ENCODE measurements at regions of chr2 and their contacts with region 1.

Region 1: DNA sequence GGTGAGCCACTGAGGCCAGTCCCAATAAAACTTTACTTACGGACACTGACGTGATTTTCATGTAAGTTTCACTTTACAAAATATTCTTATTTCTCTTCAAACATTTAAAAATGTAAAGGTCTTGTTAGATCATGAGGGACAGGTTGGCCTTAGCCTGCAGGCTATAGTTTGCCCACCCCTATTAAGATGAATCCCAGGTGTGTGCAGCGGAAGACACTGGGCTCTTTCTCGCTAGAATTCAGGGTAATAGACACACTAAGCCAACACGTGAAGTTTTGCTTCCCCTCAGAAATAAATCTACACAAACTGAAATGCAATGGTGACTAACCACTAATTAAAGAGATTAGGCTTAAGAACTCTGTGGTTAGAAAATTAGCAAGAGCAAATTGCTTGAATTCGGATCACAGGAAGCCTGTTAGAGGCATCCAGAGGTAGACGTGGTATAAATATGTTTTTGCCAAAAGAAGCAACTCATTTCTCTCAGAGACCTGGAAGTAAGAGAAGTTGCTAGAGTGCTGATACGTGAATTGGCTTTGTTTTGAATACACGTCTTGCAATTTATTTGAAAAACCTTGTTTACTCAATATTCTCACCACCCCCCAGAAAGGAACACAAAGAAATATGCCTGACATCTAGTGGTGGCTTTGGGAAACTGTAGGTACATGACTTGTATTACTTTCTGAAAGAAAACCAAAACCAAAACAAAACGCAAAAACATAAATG is 151.6 kb downstream of the DTNB start:
- DNase-seq: no peak
- ATAC-seq: peak; percentile 97
- H3K4me3 Mint-ChIP-seq: peak overlapping the region; percentile 7
- H3K27ac Mint-ChIP-seq: peak overlapping the region; percentile 38
- H3K4me1 Mint-ChIP-seq: peaks cover 23% of the 10 kb centered on the region
- H3K27me3 Mint-ChIP-seq: no peaks in the 10 kb centered on the region
- CTCF ChIP-seq: no peak

Region 2: GRCh38 chr2:25228848-25229278 is 293.0 kb before region 1 on chr2:
- CTCF ChIA-PET with region 1: no interaction called
- POLR2A ChIA-PET with region 1: no interaction called
- intact Hi-C with region 1: no loop called
- DNase-seq: no peak
- ATAC-seq: peak; percentile 59
- H3K4me3 Mint-ChIP-seq: no peak overlapping the region
- H3K27ac Mint-ChIP-seq: no peak overlapping the region
- H3K4me1 Mint-ChIP-seq: peaks cover 18% of the 10 kb centered on the region
- H3K27me3 Mint-ChIP-seq: no peaks in the 10 kb centered on the region
- CTCF ChIP-seq: no peak

Region 3: GRCh38 chr2:25252281-25253105 is 269.3 kb before region 1 on chr2:
- CTCF ChIA-PET with region 1: no interaction called
- POLR2A ChIA-PET with region 1: no interaction called
- intact Hi-C with region 1: loop called (anchors 5 kb)
- DNase-seq: peak; percentile 46
- ATAC-seq: peak; percentile 65
- H3K4me3 Mint-ChIP-seq: peak overlapping the region; percentile 78
- H3K27ac Mint-ChIP-seq: no peak overlapping the region
- H3K4me1 Mint-ChIP-seq: peaks cover 29% of the 10 kb centered on the region
- H3K27me3 Mint-ChIP-seq: no peaks in the 10 kb centered on the region
- CTCF ChIP-seq: no peak

Region 4: DNA sequence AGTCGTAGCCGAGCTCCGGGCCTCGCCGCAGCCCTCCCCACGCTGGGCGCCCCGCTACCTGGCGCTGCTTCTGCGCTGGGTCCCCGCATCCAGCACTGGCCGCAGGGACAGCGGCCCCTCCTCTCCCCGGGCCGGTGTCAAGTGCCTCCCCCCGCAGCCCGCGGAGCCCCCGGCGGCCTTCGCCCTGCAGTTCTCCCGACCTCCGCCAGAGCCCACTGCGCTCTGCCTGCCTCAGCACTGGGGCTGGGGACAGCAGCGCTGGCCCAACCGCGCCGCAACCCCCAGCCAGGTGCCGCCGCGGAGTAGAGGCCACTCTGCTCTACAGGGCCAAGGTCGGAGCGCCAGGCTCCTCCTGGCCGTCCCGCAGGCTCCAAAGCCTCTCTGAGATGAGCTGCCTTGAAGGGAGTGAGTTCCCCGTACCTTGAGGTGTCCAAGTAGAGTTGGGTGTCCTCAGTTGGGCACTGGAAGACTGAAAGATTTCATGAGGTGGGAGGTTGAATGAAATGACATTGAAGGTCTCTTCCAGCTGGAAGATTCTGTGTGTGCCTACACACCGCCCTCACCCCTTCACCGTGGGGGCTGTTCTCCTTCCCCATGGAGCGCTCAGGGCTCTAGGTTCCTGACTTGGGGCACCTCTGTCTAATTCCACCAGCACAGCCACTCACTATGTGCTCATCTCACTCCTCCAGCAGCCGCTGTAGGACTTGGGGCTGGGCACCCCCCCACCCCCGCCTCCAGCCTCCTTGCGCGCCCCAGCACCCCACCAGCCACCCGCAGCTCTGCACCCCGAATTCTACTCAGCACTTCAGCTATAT is 179.2 kb before region 1 on chr2:
- CTCF ChIA-PET with region 1: interaction called, 3 read pairs
- POLR2A ChIA-PET with region 1: no interaction called
- intact Hi-C with region 1: loop called (anchors 1 kb)
- DNase-seq: peak; percentile 82
- ATAC-seq: peak; percentile 92
- H3K4me3 Mint-ChIP-seq: peak overlapping the region; percentile 84
- H3K27ac Mint-ChIP-seq: peak overlapping the region; percentile 59
- H3K4me1 Mint-ChIP-seq: peaks cover 19% of the 10 kb centered on the region
- H3K27me3 Mint-ChIP-seq: peaks cover 1% of the 10 kb centered on the region
- CTCF ChIP-seq: peak; percentile 74

Region 5: GRCh38 chr2:25411281-25411680 is 110.5 kb before region 1 on chr2:
- CTCF ChIA-PET with region 1: no interaction called
- POLR2A ChIA-PET with region 1: interaction called, 4 read pairs
- intact Hi-C with region 1: loop called (anchors 1 kb)
- DNase-seq: no peak
- ATAC-seq: peak; percentile 50
- H3K4me3 Mint-ChIP-seq: peak overlapping the region; percentile 71
- H3K27ac Mint-ChIP-seq: peak overlapping the region; percentile 87
- H3K4me1 Mint-ChIP-seq: peaks cover 71% of the 10 kb centered on the region
- H3K27me3 Mint-ChIP-seq: no peaks in the 10 kb centered on the region
- CTCF ChIP-seq: no peak

Region 6: DNA sequence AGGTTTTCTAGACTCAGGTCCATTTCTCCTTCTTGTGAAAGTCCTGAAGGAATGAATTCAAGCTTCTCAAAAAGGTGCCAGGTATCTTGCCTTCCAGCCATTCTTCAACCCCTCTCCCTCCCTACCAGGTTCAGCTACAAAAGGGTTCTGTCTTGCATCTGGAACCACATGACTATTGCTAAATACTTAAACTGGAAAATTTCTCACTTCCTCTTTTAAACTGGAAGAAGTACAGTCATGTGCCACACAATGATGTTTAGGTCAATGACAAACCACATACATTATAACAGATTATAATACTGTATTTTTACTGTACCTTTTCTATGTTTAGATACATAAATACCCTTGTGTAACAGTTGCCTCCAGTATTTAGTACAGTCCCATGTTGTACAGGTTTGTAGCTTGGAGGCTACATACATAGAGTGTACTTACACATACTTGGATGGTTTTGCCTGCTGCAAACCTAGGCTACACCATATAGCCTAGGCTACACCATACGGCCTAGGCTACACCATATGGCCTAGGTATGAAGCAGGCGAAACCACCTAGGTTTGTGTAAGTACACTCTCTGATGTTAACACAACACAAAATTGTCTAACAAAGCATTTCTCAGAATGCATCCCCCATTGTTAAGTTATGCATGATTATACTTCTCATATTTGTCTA is 38.1 kb before region 1 on chr2:
- CTCF ChIA-PET with region 1: no interaction called
- POLR2A ChIA-PET with region 1: interaction called, 5 read pairs
- intact Hi-C with region 1: loop called (anchors 5 kb)
- DNase-seq: no peak
- ATAC-seq: peak; percentile 83
- H3K4me3 Mint-ChIP-seq: peak overlapping the region; percentile 45
- H3K27ac Mint-ChIP-seq: peak overlapping the region; percentile 59
- H3K4me1 Mint-ChIP-seq: peaks cover 43% of the 10 kb centered on the region
- H3K27me3 Mint-ChIP-seq: no peaks in the 10 kb centered on the region
- CTCF ChIP-seq: no peak

Region 7: DNA sequence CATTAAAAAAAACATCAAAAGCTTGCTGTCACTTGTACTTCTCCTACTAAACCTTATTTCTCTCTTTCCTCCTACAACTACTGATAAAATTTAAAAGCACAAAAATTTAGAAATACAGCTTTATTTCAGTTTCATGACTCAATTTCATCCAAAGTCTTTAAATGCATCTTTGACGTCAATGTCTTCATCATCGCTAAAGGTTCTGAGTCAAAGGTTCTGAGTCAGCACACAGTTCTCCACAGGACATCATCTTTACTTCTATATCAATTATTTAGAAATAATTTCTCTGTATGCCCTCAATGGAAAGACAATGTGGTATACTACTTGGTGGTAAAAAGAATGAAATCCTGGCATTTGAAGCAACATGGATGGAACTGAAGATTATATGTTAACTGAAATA is 16.2 kb before region 1 on chr2:
- CTCF ChIA-PET with region 1: no interaction called
- POLR2A ChIA-PET with region 1: no interaction called
- intact Hi-C with region 1: no loop called
- DNase-seq: no peak
- ATAC-seq: no peak
- H3K4me3 Mint-ChIP-seq: no peak overlapping the region
- H3K27ac Mint-ChIP-seq: no peak overlapping the region
- H3K4me1 Mint-ChIP-seq: no peaks in the 10 kb centered on the region
- H3K27me3 Mint-ChIP-seq: no peaks in the 10 kb centered on the region
- CTCF ChIP-seq: no peak

Region 8: GRCh38 chr2:25772078-25772477 is 250.3 kb after region 1 on chr2:
- CTCF ChIA-PET with region 1: no interaction called
- POLR2A ChIA-PET with region 1: no interaction called
- intact Hi-C with region 1: no loop called
- DNase-seq: no peak
- ATAC-seq: no peak
- H3K4me3 Mint-ChIP-seq: no peak overlapping the region
- H3K27ac Mint-ChIP-seq: no peak overlapping the region
- H3K4me1 Mint-ChIP-seq: peaks cover 2% of the 10 kb centered on the region
- H3K27me3 Mint-ChIP-seq: no peaks in the 10 kb centered on the region
- CTCF ChIP-seq: no peak

Region 9: DNA sequence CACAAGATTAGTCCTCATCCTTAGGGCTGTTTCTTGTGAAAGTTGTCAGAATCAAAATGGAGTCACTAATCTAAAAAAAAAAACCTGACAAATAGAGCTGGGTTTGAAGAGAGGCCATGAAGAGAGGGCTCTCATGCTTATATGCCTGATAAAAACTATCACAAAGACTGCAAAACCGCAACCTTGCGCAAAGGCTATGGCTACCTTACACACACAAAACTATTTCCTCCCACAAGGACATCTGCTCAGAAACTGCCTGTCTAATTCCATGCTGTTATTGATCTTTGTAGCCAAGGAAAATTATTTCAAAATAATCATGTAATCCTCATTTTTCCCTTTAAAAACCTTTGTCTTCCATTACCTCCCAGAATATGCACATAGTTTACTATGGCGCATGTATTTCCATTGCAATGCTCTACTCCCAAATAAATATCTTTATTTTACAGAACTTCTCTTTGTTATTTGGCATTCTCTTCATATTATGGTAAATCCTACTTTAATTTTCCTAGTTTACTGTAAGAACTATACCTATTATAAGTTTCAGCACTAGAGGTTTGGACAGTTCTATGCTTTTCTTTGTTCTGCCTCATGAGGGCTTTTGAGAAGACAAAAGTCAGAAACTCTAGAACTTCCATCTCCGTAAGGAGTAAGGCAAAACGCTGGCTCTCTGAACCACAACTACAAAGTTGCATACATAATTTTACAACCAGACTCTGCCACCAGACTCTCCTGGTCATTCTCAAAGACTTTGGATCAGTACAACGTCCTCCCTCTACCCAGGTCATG is 1316.5 kb after region 1 on chr2:
- CTCF ChIA-PET with region 1: no interaction called
- POLR2A ChIA-PET with region 1: no interaction called
- intact Hi-C with region 1: no loop called
- DNase-seq: no peak
- ATAC-seq: no peak
- H3K4me3 Mint-ChIP-seq: no peak overlapping the region
- H3K27ac Mint-ChIP-seq: no peak overlapping the region
- H3K4me1 Mint-ChIP-seq: no peaks in the 10 kb centered on the region
- H3K27me3 Mint-ChIP-seq: peaks cover 34% of the 10 kb centered on the region
- CTCF ChIP-seq: no peak

Measured in activated B cell treated with CpG ODN at 0.5 μM for 24 hours (primary cell).